ENCODE measurements at regions of chr14 and their contacts with region 1.

Region 1: GRCh38 chr14:105682940-105683570 is 156.7 kb downstream of the TMEM121 start:
- DNase-seq: no peak
- ATAC-seq: no peak
- H3K4me3 ChIP-seq: no peak overlapping the region
- H3K27ac ChIP-seq: no peak overlapping the region
- H3K4me1 ChIP-seq: no peaks in the 10 kb centered on the region
- H3K27me3 ChIP-seq: no peaks in the 10 kb centered on the region
- CTCF ChIP-seq: no peak
- POLR2A ChIP-seq: no peak
- RAD21 ChIP-seq: no peak

Region 2: GRCh38 chr14:105562713-105563346 is 120.2 kb before region 1 on chr14:
- CTCF ChIA-PET with region 1: no interaction called
- POLR2A ChIA-PET with region 1: no interaction called
- RAD21 ChIA-PET with region 1: no interaction called
- intact Hi-C with region 1: loop called (anchors 10 kb)
- DNase-seq: no peak
- ATAC-seq: no peak
- H3K4me3 ChIP-seq: no peak overlapping the region
- H3K27ac ChIP-seq: 0 out of 2 replicates have a peak overlapping the region, but pooled peaks have one; percentile 22
- H3K4me1 ChIP-seq: no peaks in the 10 kb centered on the region
- H3K27me3 ChIP-seq: no peaks in the 10 kb centered on the region
- CTCF ChIP-seq: no peak
- POLR2A ChIP-seq: no peak
- RAD21 ChIP-seq: no peak

Region 3: GRCh38 chr14:105999361-106000028 is 316.4 kb after region 1 on chr14:
- CTCF ChIA-PET with region 1: no interaction called
- POLR2A ChIA-PET with region 1: no interaction called
- RAD21 ChIA-PET with region 1: no interaction called
- intact Hi-C with region 1: loop called (anchors 10 kb)
- DNase-seq: peak; percentile 24
- ATAC-seq: no peak
- H3K4me3 ChIP-seq: no peak overlapping the region
- H3K27ac ChIP-seq: no peak overlapping the region
- H3K4me1 ChIP-seq: no peaks in the 10 kb centered on the region
- H3K27me3 ChIP-seq: no peaks in the 10 kb centered on the region
- CTCF ChIP-seq: peak; percentile 60 to 98 (median 64)
- POLR2A ChIP-seq: no peak
- RAD21 ChIP-seq: peak; percentile 33